Naive thymus-derived CD4-positive, alpha-beta T cell (primary cell): ENCODE measurements at regions of chr3 and their contacts with region 1.

Region 1: GRCh38 chr3:44761424-44762169 is at the starts of genes KIAA1143 and KIF15:
- DNase-seq: peak; percentile 92 to 98 (median 94)
- ATAC-seq: peak; percentile 100
- H3K4me3 ChIP-seq: peak within 1 kb of the TSS; percentile 99
- H3K4me3 Mint-ChIP-seq: peak within 1 kb of the TSS; percentile 86 to 94 (median 90)
- H3K27ac ChIP-seq: peak within 1 kb of the TSS; percentile 82
- H3K27ac Mint-ChIP-seq: peak within 1 kb of the TSS; percentile 80 to 96 (median 92)
- H3K4me1 ChIP-seq: peaks cover 0 to 6% of the 10 kb centered on the region in 2 donors
- H3K4me1 Mint-ChIP-seq: peaks cover 16 to 51% (median 42%) of the 10 kb centered on the region in 7 donors
- H3K27me3 ChIP-seq: no peaks in the 10 kb centered on the region
- H3K27me3 Mint-ChIP-seq: peaks cover 0 to 3% (median 0%) of the 10 kb centered on the region in 5 donors
- total RNA-seq, gene KIAA1143: 17.5 to 44.4 (median 39.8) TPM
- total RNA-seq, gene KIF15: 0.11 to 31.9 (median 0.30) TPM

Region 2: GRCh38 chr3:44477312-44478030 is 284.1 kb before region 1 on chr3 and contains the start of gene ZNF445:
- CTCF ChIA-PET with region 1: interaction called, 3 read pairs
- POLR2A ChIA-PET with region 1: no interaction called
- intact Hi-C with region 1: loop called (anchors 1 kb)
- DNase-seq: peak; percentile 66 to 85 (median 79)
- ATAC-seq: peak; percentile 96
- H3K4me3 ChIP-seq: peak within 1 kb of the TSS; percentile 91
- H3K4me3 Mint-ChIP-seq: peak within 1 kb of the TSS; percentile 85 to 98 (median 92)
- H3K27ac ChIP-seq: peak within 1 kb of the TSS; percentile 70
- H3K27ac Mint-ChIP-seq: peak within 1 kb of the TSS; percentile 79 to 95 (median 87)
- H3K4me1 ChIP-seq: peaks cover 4 to 18% of the 10 kb centered on the region in 2 donors
- H3K4me1 Mint-ChIP-seq: peaks cover 16 to 51% (median 40%) of the 10 kb centered on the region in 7 donors
- H3K27me3 ChIP-seq: no peaks in the 10 kb centered on the region
- H3K27me3 Mint-ChIP-seq: no peaks in the 10 kb centered on the region
- total RNA-seq, gene ZNF445: 16.8 to 37.6 (median 24.4) TPM

Region 3: DNA sequence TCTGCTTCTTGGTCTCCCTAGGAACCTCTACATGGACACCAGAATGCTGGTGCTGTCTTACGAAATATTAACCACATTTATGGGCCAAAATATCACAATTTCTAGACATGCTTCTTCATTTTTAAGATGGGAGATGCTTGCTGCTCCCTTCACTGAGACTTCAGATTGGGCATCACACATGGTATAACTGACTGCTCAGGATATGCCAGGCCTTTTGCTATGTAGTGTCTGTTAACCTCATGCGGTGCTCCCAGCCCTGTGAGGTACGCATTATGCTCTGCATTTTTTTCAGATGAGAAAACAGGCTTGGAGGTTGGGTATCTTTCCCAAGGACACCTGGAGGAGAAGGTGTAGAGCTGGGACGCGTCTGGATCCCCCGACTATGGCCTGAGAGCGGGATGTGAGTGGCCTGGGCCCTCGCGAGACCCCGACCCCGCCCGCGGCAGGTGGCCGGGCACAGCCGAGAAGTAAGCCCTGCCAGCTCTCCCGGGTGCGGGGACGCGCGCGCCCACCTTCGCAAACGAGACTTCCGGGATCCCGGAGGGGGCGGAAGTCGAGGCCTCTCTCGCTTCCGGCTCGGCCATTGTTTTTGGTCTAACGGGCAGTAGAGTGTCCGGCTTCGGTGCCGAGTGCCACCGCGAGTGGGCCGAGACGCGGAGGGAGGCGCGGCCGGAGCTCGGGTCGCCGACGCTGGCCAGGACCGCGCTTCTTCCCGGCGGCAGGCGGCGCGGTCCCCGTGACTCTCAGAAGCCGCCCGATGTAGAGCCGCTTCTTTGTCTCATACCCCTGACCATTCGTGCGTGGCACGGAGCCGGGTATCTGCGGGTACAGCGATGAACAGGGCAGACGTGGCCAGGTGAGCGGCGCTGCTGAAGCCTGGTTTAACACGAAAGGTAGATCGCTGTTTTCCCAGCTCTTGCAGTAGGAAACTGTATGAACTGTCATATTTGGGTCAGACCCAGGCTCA is 206.7 kb before region 1 on chr3 and contains the start of gene ZKSCAN7:
- CTCF ChIA-PET with region 1: no interaction called
- POLR2A ChIA-PET with region 1: no interaction called
- intact Hi-C with region 1: loop called in 1 of 2 experiments (anchors 2 kb)
- DNase-seq: peak; percentile 12 to 49 (median 42)
- ATAC-seq: peak; percentile 71
- H3K4me3 ChIP-seq: peak within 1 kb of the TSS; percentile 87
- H3K4me3 Mint-ChIP-seq: peak within 1 kb of the TSS; percentile 78 to 94 (median 91)
- H3K27ac ChIP-seq: peak within 1 kb of the TSS; percentile 47
- H3K27ac Mint-ChIP-seq: peak within 1 kb of the TSS; percentile 6 to 94 (median 82)
- H3K4me1 ChIP-seq: peaks cover 9 to 14% of the 10 kb centered on the region in 2 donors
- H3K4me1 Mint-ChIP-seq: peaks cover 10 to 34% (median 26%) of the 10 kb centered on the region in 7 donors
- H3K27me3 ChIP-seq: no peaks in the 10 kb centered on the region
- H3K27me3 Mint-ChIP-seq: peaks cover 0 to 4% (median 1%) of the 10 kb centered on the region in 5 donors
- total RNA-seq, gene ZKSCAN7: 1.1 to 4.5 (median 1.7) TPM

Region 4: GRCh38 chr3:44729384-44729910 is 32.1 kb before region 1 on chr3 and contains the start of gene ZNF501:
- CTCF ChIA-PET with region 1: no interaction called
- POLR2A ChIA-PET with region 1: interaction called, 30 read pairs
- intact Hi-C with region 1: loop called (anchors 1 kb)
- DNase-seq: peak; percentile 65 to 83 (median 75)
- ATAC-seq: peak; percentile 97
- H3K4me3 ChIP-seq: peak within 1 kb of the TSS; percentile 75
- H3K4me3 Mint-ChIP-seq: peak within 1 kb of the TSS; percentile 90 to 99 (median 92)
- H3K27ac ChIP-seq: peak within 1 kb of the TSS; percentile 45
- H3K27ac Mint-ChIP-seq: peak within 1 kb of the TSS; percentile 61 to 91 (median 84)
- H3K4me1 ChIP-seq: no peaks in the 10 kb centered on the region
- H3K4me1 Mint-ChIP-seq: peaks cover 2 to 20% (median 15%) of the 10 kb centered on the region in 7 donors
- H3K27me3 ChIP-seq: no peaks in the 10 kb centered on the region
- H3K27me3 Mint-ChIP-seq: no peaks in the 10 kb centered on the region
- total RNA-seq, gene ZNF501: 1.1 to 5.3 (median 2.6) TPM

Region 5: DNA sequence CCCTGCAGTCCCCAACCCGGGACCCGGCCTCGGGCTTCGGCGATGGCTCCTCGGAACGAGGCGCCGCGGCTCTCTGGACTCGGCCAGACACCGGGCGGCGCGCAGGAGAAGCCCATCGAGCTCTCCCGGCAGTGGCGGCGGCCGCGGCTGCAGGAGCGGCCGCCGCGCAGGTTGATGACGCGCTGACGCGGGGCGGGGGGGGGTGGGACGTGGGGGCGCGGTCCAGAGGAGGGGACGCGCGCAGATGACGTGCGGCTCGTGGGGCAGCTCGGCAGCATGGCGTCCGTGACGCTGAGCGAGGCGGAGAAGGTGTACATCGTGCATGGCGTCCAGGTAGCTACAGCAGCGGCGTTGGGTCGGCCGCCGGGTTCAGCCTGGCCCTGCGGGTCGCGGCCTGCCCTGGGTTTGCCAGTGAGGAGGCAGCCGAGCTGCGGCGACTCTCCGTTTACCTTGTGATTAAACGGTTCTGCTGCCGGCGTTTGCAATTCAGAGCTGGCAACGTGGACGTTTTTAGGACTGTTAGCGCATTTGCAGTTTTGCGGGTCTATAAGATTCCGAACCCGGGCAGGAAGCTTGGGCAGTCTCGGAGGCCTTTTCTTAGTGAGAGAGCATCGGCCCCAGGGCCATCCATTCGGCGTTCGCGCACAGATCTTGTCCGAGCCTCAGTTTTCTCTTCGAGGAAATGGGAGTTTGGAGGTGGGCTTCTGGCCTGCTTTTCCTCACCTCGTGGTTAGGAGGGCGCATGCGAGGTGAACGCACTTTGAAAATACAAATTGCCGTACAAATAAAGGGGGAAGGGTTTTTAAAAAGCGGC is 214.6 kb after region 1 on chr3 and contains the starts of genes EXOSC7 and ZDHHC3:
- CTCF ChIA-PET with region 1: no interaction called
- POLR2A ChIA-PET with region 1: no interaction called
- intact Hi-C with region 1: loop called (anchors 1 kb)
- DNase-seq: peak; percentile 73 to 89 (median 85)
- ATAC-seq: peak; percentile 98
- H3K4me3 ChIP-seq: peak within 1 kb of the TSS; percentile 94
- H3K4me3 Mint-ChIP-seq: peak within 1 kb of the TSS; percentile 90 to 97 (median 94)
- H3K27ac ChIP-seq: peak within 1 kb of the TSS; percentile 98
- H3K27ac Mint-ChIP-seq: peak within 1 kb of the TSS; percentile 85 to 97 (median 94)
- H3K4me1 ChIP-seq: peaks cover 21 to 37% of the 10 kb centered on the region in 2 donors
- H3K4me1 Mint-ChIP-seq: peaks cover 50 to 87% (median 79%) of the 10 kb centered on the region in 7 donors
- H3K27me3 ChIP-seq: no peaks in the 10 kb centered on the region
- H3K27me3 Mint-ChIP-seq: no peaks in the 10 kb centered on the region
- total RNA-seq, gene EXOSC7: 30.7 to 57.9 (median 44.3) TPM
- total RNA-seq, gene ZDHHC3: 38.5 to 54.0 (median 48.8) TPM